Lower leg skin (tissue), 4 donors: ENCODE measurements at regions of chr5 and their contacts with region 1.

Region 1: DNA sequence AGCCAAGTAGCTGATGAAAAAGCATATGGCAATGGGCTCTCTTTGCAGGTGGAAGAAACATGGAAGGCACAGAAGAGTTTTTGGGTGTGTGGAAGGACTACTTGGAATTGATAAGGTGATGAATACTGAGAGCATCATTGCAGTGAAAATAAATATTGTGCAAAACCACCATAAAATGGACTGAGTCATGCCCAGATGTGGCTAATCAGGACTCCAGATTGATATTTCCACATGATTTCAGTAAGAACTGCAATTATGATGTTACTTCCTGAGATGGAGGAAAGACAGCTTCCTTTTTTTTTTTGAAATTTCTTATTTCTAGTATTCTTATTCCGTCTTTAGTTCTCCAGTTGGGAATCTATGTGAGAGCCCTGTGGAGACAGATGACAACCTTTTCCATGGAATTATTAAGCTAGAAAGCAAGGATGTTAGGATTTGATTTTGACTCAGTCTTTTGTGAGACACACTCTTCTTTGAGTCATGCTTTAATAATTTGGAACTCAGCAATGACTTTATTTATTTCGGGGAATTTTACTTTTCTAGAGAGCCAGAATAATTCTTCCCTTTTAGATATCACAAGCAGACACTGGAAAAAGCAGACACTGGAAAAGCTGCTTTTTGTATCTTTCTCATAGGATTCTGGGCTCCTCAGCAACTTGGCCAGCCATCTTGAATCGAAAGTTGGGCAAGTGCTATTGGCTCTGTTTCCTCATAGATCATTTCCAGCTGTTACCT is 94.2 kb upstream of the VCAN start:
- DNase-seq: peak in 1 of 2 donors; percentile 26
- H3K4me3 ChIP-seq: no peak overlapping the region
- CTCF ChIP-seq: no peak
- POLR2A ChIP-seq: no peak

Region 2: GRCh38 chr5:83299353-83299752 is 77.9 kb before region 1 on chr5:
- intact Hi-C with region 1: loop called (anchors 5 kb)
- DNase-seq: no peak
- H3K4me3 ChIP-seq: no peak overlapping the region
- CTCF ChIP-seq: no peak
- POLR2A ChIP-seq: no peak

Region 3: DNA sequence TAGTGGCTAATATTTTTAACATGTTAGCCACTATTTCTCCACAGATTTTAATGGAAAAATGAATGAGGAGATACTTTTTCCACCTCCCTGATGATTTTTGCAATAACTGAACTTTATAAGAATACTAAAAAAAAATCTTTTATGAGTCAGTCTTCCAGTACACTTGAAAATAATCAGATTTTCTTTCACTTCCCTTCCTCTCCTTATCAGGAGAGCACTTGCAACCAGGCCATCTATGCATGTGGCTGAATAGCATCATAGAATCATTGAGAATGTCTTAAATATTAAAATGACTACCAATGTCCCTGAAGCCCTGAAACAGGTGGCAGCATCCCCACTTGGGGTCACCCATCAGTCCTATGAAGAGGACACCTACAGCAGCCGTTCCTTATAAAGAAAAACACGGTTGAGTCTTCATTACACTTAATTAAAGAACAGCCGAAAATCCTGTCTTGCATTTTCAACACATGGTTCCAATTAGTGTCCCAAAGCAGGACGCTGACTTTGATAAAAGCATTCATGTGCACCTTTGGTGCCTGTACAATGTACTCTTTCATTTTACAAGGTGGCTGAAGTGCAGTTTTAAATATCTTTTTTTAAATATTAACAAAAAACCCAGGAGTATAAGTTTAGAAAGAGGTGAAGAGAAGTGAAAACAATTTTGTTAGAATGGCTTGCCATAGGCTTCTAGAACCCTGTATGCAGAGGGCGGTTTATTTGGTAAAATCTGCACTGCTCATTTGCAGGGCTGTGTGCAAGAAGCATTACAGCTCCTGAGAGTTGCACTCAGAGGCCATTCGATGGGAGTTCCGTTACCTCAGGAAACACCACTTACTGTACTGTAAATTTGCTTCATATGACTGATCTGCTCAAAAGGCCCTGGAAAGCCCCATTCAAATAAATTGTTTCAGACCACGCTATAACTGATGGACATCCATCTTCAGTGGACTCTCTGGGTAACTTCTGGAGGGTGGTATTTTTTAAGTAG is 12.7 kb before region 1 on chr5:
- intact Hi-C with region 1: no loop called
- DNase-seq: no peak
- H3K4me3 ChIP-seq: no peak overlapping the region
- CTCF ChIP-seq: no peak
- POLR2A ChIP-seq: no peak